CD4-positive, alpha-beta T cell (primary cell): ENCODE measurements at regions of chr7 and their contacts with region 1.

Region 1: GRCh38 chr7:150567169-150567568 is at the start of gene GIMAP4:
- DNase-seq: peak in 10 of 14 experiments; percentile 27 to 71 (median 46)
- ATAC-seq: peak; percentile 45
- H3K4me3 ChIP-seq: peak within 1 kb of the TSS; percentile 72
- H3K4me3 Mint-ChIP-seq: peak within 1 kb of the TSS; percentile 98
- H3K27ac ChIP-seq: peak within 1 kb of the TSS; percentile 60 to 81
- H3K27ac Mint-ChIP-seq: peak within 1 kb of the TSS; percentile 88
- H3K4me1 ChIP-seq: peaks cover 68% of the 10 kb centered on the region
- H3K4me1 Mint-ChIP-seq: peaks cover 84% of the 10 kb centered on the region
- H3K27me3 ChIP-seq: no peaks in the 10 kb centered on the region
- H3K27me3 Mint-ChIP-seq: no peaks in the 10 kb centered on the region
- CTCF ChIP-seq: no peak
- total RNA-seq, gene GIMAP4: 20.7 to 23.6 TPM

Region 2: GRCh38 chr7:150514748-150515222 is 52.4 kb before region 1 on chr7 and contains the start of gene GIMAP7:
- CTCF ChIA-PET with region 1: interaction called, 7 read pairs
- POLR2A ChIA-PET with region 1: interaction called, 164 read pairs
- intact Hi-C with region 1: loop called (anchors 2 kb)
- DNase-seq: peak; percentile 59 to 85 (median 70)
- ATAC-seq: peak; percentile 82
- H3K4me3 ChIP-seq: peak within 1 kb of the TSS; percentile 79
- H3K4me3 Mint-ChIP-seq: peak within 1 kb of the TSS; percentile 100
- H3K27ac ChIP-seq: peak within 1 kb of the TSS; percentile 63 to 84
- H3K27ac Mint-ChIP-seq: peak within 1 kb of the TSS; percentile 93
- H3K4me1 ChIP-seq: peaks cover 42% of the 10 kb centered on the region
- H3K4me1 Mint-ChIP-seq: peaks cover 51% of the 10 kb centered on the region
- H3K27me3 ChIP-seq: no peaks in the 10 kb centered on the region
- H3K27me3 Mint-ChIP-seq: no peaks in the 10 kb centered on the region
- CTCF ChIP-seq: no peak
- total RNA-seq, gene GIMAP7: 48.4 to 50.7 TPM

Region 3: DNA sequence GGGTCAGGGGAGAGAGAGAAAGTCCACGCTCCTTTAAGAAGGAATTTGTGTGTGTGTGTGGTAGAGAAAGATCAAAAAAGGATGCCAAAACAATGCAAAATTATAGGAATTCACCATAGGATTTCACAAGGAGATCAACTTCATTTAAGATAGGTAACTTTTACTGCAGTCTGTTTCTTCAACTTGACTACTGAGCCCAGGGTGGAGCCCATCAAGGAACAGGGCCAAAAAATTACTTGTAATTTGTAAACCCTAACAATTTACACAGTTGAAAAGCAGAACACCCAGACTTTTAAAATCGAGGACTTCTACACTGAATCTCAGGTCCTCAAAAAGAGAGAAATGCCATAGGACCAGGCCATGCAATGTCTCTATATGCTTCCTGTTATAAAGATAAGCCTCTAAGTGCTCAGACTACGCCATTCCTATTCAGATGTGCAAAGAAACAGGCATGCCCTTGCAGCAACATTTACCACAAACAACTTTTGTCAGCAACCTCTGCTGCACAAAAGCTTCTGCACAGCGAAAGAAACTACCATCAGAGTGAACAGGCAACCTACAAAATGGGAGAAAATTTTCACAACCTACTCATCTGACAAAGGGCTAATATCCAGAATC is 10.5 kb before region 1 on chr7:
- CTCF ChIA-PET with region 1: interaction called, 3 read pairs
- POLR2A ChIA-PET with region 1: interaction called, 39 read pairs
- intact Hi-C with region 1: loop called in 1 of 2 experiments (anchors 1 kb)
- DNase-seq: peak in 8 of 14 experiments; percentile 18 to 89 (median 52)
- ATAC-seq: peak; percentile 98
- H3K4me3 ChIP-seq: no peak overlapping the region
- H3K4me3 Mint-ChIP-seq: peak overlapping the region; percentile 77
- H3K27ac ChIP-seq: peak overlapping the region; percentile 56 to 57
- H3K27ac Mint-ChIP-seq: peak overlapping the region; percentile 98
- H3K4me1 ChIP-seq: peaks cover 24% of the 10 kb centered on the region
- H3K4me1 Mint-ChIP-seq: peaks cover 88% of the 10 kb centered on the region
- H3K27me3 ChIP-seq: no peaks in the 10 kb centered on the region
- H3K27me3 Mint-ChIP-seq: no peaks in the 10 kb centered on the region
- CTCF ChIP-seq: no peak

Region 4: GRCh38 chr7:150631866-150632864 is 65.0 kb after region 1 on chr7 and contains the start of gene GIMAP6:
- CTCF ChIA-PET with region 1: interaction called, 3 read pairs
- POLR2A ChIA-PET with region 1: interaction called, 68 read pairs
- intact Hi-C with region 1: loop called in 1 of 2 experiments (anchors 5 kb)
- DNase-seq: peak; percentile 21 to 76 (median 49)
- ATAC-seq: peak; percentile 68
- H3K4me3 ChIP-seq: peak within 1 kb of the TSS; percentile 79
- H3K4me3 Mint-ChIP-seq: peak within 1 kb of the TSS; percentile 96
- H3K27ac ChIP-seq: peak within 1 kb of the TSS; percentile 58 to 81
- H3K27ac Mint-ChIP-seq: peak within 1 kb of the TSS; percentile 84
- H3K4me1 ChIP-seq: peaks cover 60% of the 10 kb centered on the region
- H3K4me1 Mint-ChIP-seq: peaks cover 87% of the 10 kb centered on the region
- H3K27me3 ChIP-seq: no peaks in the 10 kb centered on the region
- H3K27me3 Mint-ChIP-seq: no peaks in the 10 kb centered on the region
- CTCF ChIP-seq: no peak
- total RNA-seq, gene GIMAP6: 14.3 to 14.9 TPM

Region 5: GRCh38 chr7:150675714-150676113 is 108.5 kb after region 1 on chr7:
- CTCF ChIA-PET with region 1: no interaction called
- POLR2A ChIA-PET with region 1: interaction called, 29 read pairs
- intact Hi-C with region 1: no loop called
- DNase-seq: no peak
- ATAC-seq: no peak
- H3K4me3 ChIP-seq: peak overlapping the region; percentile 8
- H3K4me3 Mint-ChIP-seq: peak overlapping the region; percentile 78
- H3K27ac ChIP-seq: peak overlapping the region; percentile 58 to 78
- H3K27ac Mint-ChIP-seq: peak overlapping the region; percentile 79
- H3K4me1 ChIP-seq: peaks cover 40% of the 10 kb centered on the region
- H3K4me1 Mint-ChIP-seq: peaks cover 87% of the 10 kb centered on the region
- H3K27me3 ChIP-seq: no peaks in the 10 kb centered on the region
- H3K27me3 Mint-ChIP-seq: no peaks in the 10 kb centered on the region
- CTCF ChIP-seq: no peak

Region 6: DNA sequence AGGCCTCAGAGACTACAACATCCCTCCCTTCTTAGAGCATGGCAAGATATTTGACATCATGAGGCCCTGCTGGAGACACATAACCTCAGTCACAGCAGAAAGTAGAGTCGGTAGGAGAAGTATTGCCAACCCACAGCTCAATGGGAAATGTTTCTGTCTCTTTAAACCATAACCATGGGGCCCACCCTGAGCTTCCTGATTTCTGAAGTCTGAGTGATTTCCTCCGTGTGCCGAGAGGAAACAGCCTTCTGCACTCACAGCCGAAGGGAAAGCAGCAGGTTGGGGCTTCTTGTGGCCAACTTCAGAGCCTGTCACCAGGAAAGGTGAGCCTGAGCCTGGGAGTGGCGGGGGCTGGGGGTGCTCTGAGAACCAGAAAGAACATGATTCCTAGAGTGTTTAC is 149.2 kb after region 1 on chr7 and contains the start of gene GIMAP1:
- CTCF ChIA-PET with region 1: interaction called, 8 read pairs
- POLR2A ChIA-PET with region 1: interaction called, 57 read pairs
- intact Hi-C with region 1: no loop called
- DNase-seq: peak; percentile 35 to 85 (median 72)
- ATAC-seq: peak; percentile 88
- H3K4me3 ChIP-seq: peak within 1 kb of the TSS; percentile 79
- H3K4me3 Mint-ChIP-seq: peak within 1 kb of the TSS; percentile 100
- H3K27ac ChIP-seq: peak within 1 kb of the TSS; percentile 81 to 83
- H3K27ac Mint-ChIP-seq: peak within 1 kb of the TSS; percentile 87
- H3K4me1 ChIP-seq: peaks cover 51% of the 10 kb centered on the region
- H3K4me1 Mint-ChIP-seq: peaks cover 78% of the 10 kb centered on the region
- H3K27me3 ChIP-seq: no peaks in the 10 kb centered on the region
- H3K27me3 Mint-ChIP-seq: no peaks in the 10 kb centered on the region
- CTCF ChIP-seq: no peak
- total RNA-seq, gene GIMAP1: 8.0 to 8.1 TPM

Region 7: GRCh38 chr7:150748376-150748775 is 181.2 kb after region 1 on chr7:
- CTCF ChIA-PET with region 1: interaction called, 6 read pairs
- POLR2A ChIA-PET with region 1: interaction called, 67 read pairs
- intact Hi-C with region 1: no loop called
- DNase-seq: peak in 3 of 14 experiments; percentile 54 to 58 (median 57)
- ATAC-seq: peak; percentile 61
- H3K4me3 ChIP-seq: peak overlapping the region; percentile 31
- H3K4me3 Mint-ChIP-seq: peak overlapping the region; percentile 40
- H3K27ac ChIP-seq: peak overlapping the region; percentile 65 to 69
- H3K27ac Mint-ChIP-seq: peak overlapping the region; percentile 87
- H3K4me1 ChIP-seq: peaks cover 93% of the 10 kb centered on the region
- H3K4me1 Mint-ChIP-seq: peaks cover 94% of the 10 kb centered on the region
- H3K27me3 ChIP-seq: no peaks in the 10 kb centered on the region
- H3K27me3 Mint-ChIP-seq: no peaks in the 10 kb centered on the region
- CTCF ChIP-seq: no peak